ENCODE measurements at regions of chr6 and their contacts with region 1.

Region 1: DNA sequence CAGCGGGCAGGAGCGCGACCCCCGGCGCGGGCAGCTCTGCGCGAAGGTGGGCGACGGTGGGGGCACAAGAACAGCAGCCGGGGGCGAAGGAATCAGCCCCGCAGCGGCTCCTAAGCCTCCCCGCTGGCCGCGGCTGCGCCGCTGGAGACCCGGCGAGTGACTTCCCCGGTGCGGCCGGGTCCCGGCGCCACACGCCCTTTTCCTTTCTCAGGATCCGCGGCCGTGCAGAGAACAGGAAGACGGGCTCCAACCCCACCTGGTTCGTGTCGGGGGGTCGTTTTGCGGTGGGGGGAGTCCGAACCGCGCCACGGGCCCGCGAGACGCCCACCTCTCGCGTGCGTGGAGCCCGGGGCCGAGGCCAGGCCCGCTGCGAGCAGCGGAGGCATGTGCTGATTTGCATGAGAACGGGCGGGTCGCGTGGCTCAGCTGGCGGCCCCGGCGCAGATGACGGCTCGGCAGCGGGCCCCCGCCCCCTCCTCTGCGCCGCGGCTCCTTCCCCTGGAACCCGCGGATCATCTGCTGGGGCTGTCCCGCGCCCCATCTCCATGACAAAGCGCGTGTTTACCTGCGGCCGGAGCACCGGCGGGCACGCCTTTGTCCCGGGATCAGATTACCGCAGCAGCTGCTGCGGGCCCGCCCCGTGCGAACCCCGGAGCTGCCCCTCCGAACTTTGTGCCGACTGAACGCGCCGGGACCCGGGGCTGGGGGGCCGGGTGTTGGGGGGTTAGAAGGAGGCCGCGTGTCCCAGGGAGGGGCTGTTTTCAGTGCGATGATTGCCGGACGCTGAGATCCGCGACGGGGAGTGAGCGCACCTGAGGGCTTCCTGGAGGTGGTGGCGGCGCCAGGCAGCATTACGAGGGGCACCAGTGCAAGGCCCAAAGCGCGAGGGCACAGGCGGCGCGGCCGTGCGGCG is 4.9 kb upstream of the DLL1 start:
- DNase-seq: peak in 4 of 6 donors; percentile 45 to 83 (median 50)
- ATAC-seq: peak; percentile 35 to 59 (median 40)
- H3K4me3 ChIP-seq: peak overlapping the region; percentile 14 to 75 (median 34)
- H3K27ac ChIP-seq: no peak overlapping the region
- H3K4me1 ChIP-seq: peaks cover 27 to 32% (median 28%) of the 10 kb centered on the region in 3 donors
- H3K27me3 ChIP-seq: no peaks in the 10 kb centered on the region
- CTCF ChIP-seq: no peak

Region 2: DNA sequence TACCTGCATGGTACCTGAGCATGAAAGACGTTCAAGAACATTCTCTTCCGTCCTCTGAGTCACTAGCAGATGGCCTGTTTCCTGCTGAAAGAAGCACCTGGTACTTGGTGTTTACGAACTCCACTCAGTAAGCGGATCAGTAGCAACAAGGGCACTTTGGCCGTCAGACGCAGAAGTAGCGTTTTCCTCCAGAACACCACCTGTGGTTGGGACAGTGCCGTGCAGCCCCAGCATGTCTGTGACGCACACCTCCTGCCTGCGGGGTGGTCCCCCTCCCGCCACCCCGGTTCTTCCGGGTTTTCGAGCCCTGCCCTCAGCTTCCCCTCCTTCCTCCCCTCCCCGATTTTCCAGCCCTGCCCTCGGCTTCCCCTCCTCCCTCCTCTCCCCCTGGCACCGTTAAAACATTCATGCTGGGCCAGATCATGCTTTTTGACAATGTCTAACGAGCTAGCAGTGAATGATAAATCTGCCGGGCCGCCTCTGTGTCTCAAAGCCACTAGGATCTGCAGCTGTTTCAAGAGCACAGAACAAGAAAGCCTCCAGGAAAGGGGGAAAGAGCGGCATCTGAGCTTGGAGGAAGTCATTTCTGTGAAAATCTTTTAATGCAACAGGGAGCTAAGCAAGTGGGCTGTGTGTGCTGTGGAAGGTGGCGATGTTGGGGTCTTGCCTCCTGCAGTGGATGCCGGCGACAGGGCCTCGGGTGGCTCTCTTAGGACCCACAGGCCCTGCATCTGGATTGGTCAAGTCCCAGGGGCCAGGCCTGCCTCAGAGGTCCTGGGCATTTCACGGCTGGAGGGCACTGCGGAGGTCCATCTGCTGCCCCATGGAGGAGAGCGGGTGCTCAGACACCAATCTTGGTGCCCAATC is 336.4 kb before region 1 on chr6:
- intact Hi-C with region 1: loop called in 1 of 3 experiments (anchors 10 kb)
- DNase-seq: peak in 5 of 6 donors; percentile 36 to 79 (median 53)
- ATAC-seq: peak; percentile 74 to 88 (median 80)
- H3K4me3 ChIP-seq: no peak overlapping the region
- H3K27ac ChIP-seq: peak overlapping the region in 2 of 4 donors; percentile 46 to 58
- H3K4me1 ChIP-seq: no peaks in the 10 kb centered on the region
- H3K27me3 ChIP-seq: no peaks in the 10 kb centered on the region
- CTCF ChIP-seq: peak in 1 of 4 donors; percentile 7